ENCODE measurements at regions of chr19 and their contacts with region 1.

Region 1: GRCh38 chr19:6092329-6093286 is 17.7 kb downstream of the RFX2 start:
- DNase-seq: peak; percentile 82
- H3K4me3 ChIP-seq: peak overlapping the region; percentile 21
- H3K27me3 ChIP-seq: no peaks in the 10 kb centered on the region
- CTCF ChIP-seq: peak; percentile 22; the same call in 1 of the 2 replicates

Region 2: DNA sequence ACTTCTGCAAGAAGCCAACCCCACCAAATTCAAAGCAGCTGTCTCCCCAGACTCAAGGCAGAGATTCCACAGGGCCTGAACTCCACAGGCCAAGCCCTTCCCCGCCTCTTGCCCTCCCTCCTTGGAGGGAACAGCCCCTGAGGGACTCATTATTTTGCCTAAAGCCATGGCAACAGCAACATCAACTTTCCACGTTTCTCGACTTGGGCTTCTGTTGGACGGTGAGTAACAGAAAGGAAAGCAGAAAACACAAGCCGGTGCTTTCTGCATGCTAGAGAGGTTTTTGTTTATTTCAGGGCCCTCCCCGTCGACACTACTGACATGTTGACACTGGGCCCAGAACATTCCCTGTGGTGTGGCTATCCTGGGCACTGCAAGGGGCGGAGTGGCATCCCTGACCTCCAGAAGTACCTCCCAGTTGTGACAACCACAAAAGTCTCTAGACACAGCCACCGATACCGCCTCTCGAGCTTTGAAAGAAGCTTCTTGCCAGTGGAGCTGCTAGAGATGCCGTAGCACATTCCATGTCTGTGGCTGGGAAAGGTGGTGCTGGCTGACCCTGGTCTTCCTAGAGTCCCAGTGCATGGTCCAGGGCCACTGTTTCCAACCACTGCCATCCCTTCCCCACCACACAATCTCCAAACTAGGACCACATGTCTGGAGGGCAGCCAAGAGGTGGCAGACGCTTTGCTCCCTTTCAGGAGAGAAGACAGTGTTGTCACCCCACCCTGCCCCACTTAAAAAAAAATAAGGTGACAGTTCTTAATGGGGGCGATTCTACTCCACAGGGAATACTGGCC is 165.8 kb before region 1 on chr19:
- CTCF ChIA-PET with region 1: no interaction called
- POLR2A ChIA-PET with region 1: no interaction called
- DNase-seq: peak; percentile 96
- H3K4me3 ChIP-seq: no peak overlapping the region
- H3K27me3 ChIP-seq: no peaks in the 10 kb centered on the region
- CTCF ChIP-seq: no peak

Region 3: DNA sequence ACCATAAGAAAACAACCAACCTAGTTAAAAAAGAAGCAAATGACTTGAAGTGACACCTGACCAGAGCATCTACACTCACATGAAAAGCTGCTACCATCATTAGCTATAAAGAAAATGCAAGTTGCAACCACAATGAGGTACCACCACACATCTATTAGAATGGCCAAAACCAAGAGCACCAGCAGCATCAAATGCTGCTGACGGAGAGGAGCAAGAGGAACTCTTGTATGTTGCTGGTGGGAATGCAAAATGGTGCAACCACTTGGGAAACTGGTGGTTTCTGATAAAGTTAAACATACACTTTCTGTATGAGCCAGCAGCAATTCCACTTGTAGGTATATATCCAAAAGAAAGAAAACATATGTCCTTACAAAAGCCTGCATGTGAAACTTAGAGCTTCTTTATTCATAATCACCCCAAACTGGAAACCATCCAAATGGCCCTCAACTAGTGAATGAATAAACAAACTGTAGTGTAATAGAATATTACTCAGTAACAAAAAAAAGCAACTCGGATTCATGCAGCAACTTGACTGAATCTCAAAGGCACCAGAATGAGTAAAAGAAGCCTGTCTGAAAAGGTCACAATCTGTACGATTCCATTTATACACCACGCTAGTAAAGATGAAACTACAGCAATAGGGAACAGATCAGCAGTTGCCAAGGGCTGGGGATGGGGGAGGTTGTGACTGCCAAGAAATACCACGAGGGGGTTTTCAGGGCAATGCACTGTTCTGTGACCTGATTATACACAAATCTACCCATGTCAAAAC is 53.8 kb before region 1 on chr19:
- CTCF ChIA-PET with region 1: no interaction called
- POLR2A ChIA-PET with region 1: no interaction called
- DNase-seq: no peak
- H3K4me3 ChIP-seq: no peak overlapping the region
- H3K27me3 ChIP-seq: no peaks in the 10 kb centered on the region
- CTCF ChIP-seq: no peak

Region 4: GRCh38 chr19:6056801-6057650 is 35.6 kb before region 1 on chr19:
- CTCF ChIA-PET with region 1: interaction called, 3 read pairs
- POLR2A ChIA-PET with region 1: interaction called, 29 read pairs
- DNase-seq: peak; percentile 95
- H3K4me3 ChIP-seq: no peak overlapping the region
- H3K27me3 ChIP-seq: no peaks in the 10 kb centered on the region
- CTCF ChIP-seq: no peak

Region 5: GRCh38 chr19:6103217-6103644 is 10.6 kb after region 1 on chr19:
- CTCF ChIA-PET with region 1: interaction called, 12 read pairs
- POLR2A ChIA-PET with region 1: interaction called, 4 read pairs
- DNase-seq: peak; percentile 75
- H3K4me3 ChIP-seq: no peak overlapping the region
- H3K27me3 ChIP-seq: no peaks in the 10 kb centered on the region
- CTCF ChIP-seq: no peak